Caco-2 (cell line): ENCODE measurements at regions of chr4 and their contacts with region 1.

Region 1: DNA sequence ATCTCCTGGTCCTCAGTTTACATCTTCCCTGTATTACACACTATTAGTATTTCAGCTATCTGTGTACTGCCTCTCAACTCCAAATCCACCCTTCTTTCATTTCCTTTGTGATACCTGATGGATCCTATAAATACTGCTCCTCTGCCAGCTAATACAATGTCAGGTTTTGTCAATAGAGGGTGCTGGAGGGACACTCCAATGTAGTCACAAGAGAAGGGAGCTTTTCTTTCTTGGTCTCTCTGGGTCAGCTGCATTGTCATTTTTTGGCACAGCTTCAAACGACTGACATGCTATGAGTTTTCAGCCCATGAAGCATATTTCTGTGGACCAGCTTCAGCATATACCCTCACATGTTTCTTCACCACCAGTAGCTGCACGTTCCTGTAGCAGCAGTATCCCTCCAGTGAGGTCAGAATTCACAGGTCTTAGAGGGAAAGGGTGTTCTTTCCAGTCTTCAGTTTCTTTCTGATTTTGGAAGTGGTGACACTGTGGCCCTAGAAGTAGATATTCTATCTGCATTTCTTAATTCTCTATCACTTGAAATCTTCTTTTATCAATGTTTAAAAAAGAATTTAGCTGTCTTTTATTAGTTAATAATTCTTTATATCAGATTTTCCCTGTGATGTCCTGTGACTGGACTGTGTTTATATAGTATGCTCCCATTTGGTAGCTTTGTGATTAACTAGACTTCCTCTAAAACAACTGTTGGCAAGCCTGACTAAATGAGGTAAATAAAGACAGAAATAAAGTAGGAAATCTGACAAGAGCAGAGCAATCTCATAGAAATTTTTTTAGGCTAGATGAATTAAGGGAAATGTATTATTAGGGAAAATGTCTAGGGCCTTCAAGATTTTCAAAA is 60.6 kb downstream of the GABRA2 start:
- DNase-seq: peak; percentile 54 to 73
- H3K4me3 ChIP-seq: no peak overlapping the region
- H3K4me3 Mint-ChIP-seq: no peak overlapping the region
- H3K27ac Mint-ChIP-seq: no peak overlapping the region
- H3K4me1 ChIP-seq: no peaks in the 10 kb centered on the region
- H3K4me1 Mint-ChIP-seq: no peaks in the 10 kb centered on the region
- H3K27me3 ChIP-seq: no peaks in the 10 kb centered on the region
- H3K27me3 Mint-ChIP-seq: no peaks in the 10 kb centered on the region
- CTCF ChIP-seq: peak; percentile 66 to 69

Region 2: DNA sequence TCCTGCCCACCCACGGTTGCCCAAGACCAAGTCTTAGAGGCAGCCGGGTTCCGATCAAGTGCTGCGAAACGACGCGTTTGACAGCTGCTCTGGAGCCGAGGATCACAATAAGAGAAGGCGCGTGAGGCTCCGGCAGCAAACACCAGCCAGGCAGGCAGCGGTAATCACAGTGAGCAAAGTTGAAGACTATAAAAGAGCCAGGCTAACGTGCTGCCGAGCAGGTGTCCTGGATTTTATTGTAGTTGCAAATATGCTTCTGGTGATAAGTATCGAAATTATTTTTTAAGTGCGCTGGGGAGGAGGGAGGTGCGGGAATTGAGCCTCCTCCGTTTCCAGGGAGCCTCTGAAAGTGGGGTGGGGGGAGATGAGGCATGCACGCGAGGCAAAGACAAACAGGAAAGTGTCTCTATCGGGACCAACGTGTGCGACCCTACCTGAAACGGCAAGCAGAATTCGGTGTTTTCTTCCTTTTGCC is 60.0 kb after region 1 on chr4:
- CTCF ChIA-PET with region 1: interaction called, 7 read pairs
- POLR2A ChIA-PET with region 1: no interaction called
- intact Hi-C with region 1: loop called (anchors 2 kb)
- DNase-seq: peak; percentile 36 to 39
- H3K4me3 ChIP-seq: peak overlapping the region; percentile 44
- H3K4me3 Mint-ChIP-seq: peak overlapping the region; percentile 85
- H3K27ac Mint-ChIP-seq: peak overlapping the region; percentile 56
- H3K4me1 ChIP-seq: 0 out of 2 replicates have a peak, but pooled peaks cover 6% of the 10 kb centered on the region
- H3K4me1 Mint-ChIP-seq: peaks cover 12% of the 10 kb centered on the region
- H3K27me3 ChIP-seq: peaks cover 1% of the 10 kb centered on the region; the same call in 1 of the 2 replicates
- H3K27me3 Mint-ChIP-seq: peaks cover 16% of the 10 kb centered on the region
- CTCF ChIP-seq: no peak

Region 3: GRCh38 chr4:46844325-46844917 is 515.1 kb after region 1 on chr4:
- CTCF ChIA-PET with region 1: interaction called, 3 read pairs
- POLR2A ChIA-PET with region 1: no interaction called
- intact Hi-C with region 1: loop called (anchors 2 kb)
- DNase-seq: peak; percentile 66 to 76
- H3K4me3 ChIP-seq: no peak overlapping the region
- H3K4me3 Mint-ChIP-seq: no peak overlapping the region
- H3K27ac Mint-ChIP-seq: no peak overlapping the region
- H3K4me1 ChIP-seq: peaks cover 24% of the 10 kb centered on the region
- H3K4me1 Mint-ChIP-seq: peaks cover 16% of the 10 kb centered on the region
- H3K27me3 ChIP-seq: no peaks in the 10 kb centered on the region
- H3K27me3 Mint-ChIP-seq: no peaks in the 10 kb centered on the region
- CTCF ChIP-seq: peak; percentile 52 to 74

Region 4: GRCh38 chr4:47002593-47002992 is 673.2 kb after region 1 on chr4:
- CTCF ChIA-PET with region 1: no interaction called
- POLR2A ChIA-PET with region 1: no interaction called
- intact Hi-C with region 1: loop called (anchors 10 kb)
- DNase-seq: peak in 1 of 2 experiments; percentile 7
- H3K4me3 ChIP-seq: no peak overlapping the region
- H3K4me3 Mint-ChIP-seq: no peak overlapping the region
- H3K27ac Mint-ChIP-seq: no peak overlapping the region
- H3K4me1 ChIP-seq: peaks cover 4% of the 10 kb centered on the region; the same call in 1 of the 2 replicates
- H3K4me1 Mint-ChIP-seq: peaks cover 4% of the 10 kb centered on the region
- H3K27me3 ChIP-seq: no peaks in the 10 kb centered on the region
- H3K27me3 Mint-ChIP-seq: no peaks in the 10 kb centered on the region
- CTCF ChIP-seq: peak; percentile 42 to 53

Region 5: GRCh38 chr4:47383829-47384427 is 1054.6 kb after region 1 on chr4:
- CTCF ChIA-PET with region 1: no interaction called
- POLR2A ChIA-PET with region 1: no interaction called
- intact Hi-C with region 1: loop called (anchors 5 kb)
- DNase-seq: peak in 1 of 2 experiments; percentile 5
- H3K4me3 ChIP-seq: no peak overlapping the region
- H3K4me3 Mint-ChIP-seq: no peak overlapping the region
- H3K27ac Mint-ChIP-seq: no peak overlapping the region
- H3K4me1 ChIP-seq: no peaks in the 10 kb centered on the region
- H3K4me1 Mint-ChIP-seq: no peaks in the 10 kb centered on the region
- H3K27me3 ChIP-seq: no peaks in the 10 kb centered on the region; the same call in 1 of the 2 replicates
- H3K27me3 Mint-ChIP-seq: no peaks in the 10 kb centered on the region
- CTCF ChIP-seq: peak; percentile 19 to 52